ENCODE measurements at regions of chr11 and their contacts with region 1.

Region 1: DNA sequence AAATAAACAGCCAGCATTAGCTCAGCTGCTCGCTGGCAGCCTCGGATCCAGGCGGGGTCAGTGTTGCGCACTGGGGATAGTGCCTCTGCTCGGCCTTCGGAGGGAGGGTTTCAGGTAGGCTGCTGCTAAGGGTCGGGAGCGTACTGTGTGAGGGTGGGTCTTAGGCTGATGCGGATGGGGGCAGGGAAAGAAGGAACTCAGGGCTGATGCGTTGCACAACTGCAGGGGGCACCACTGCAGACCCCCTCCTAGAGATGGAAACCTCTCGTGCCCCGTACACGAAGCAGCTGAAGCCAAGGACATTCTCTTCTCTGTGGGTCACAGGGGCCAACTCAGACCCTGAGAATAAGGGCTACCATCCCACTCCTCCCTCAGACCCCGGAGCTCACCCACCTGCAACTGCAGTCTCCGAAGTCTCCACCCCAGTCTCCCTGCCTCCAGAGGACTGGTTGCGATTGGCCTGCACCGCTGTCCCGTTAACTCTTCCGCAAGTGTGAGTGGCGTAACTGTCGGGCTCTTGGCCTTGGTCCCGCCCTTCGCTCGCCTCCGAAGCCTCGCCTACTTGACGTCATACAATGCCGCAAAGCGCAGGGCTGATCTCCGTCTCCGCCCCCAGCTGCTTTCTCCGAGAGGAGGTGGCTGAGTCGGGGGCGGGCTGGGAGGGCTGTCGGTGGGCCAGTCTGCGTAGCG is at the start of gene KBTBD3:
- DNase-seq: peak; percentile 100
- total RNA-seq, gene KBTBD3: 7.2 TPM

Region 2: GRCh38 chr11:105937331-105937730 is 139.7 kb before region 1 on chr11:
- intact Hi-C with region 1: no loop called
- DNase-seq: no peak

Region 3: GRCh38 chr11:106021967-106022794 is 54.9 kb before region 1 on chr11 and contains the start of gene MSANTD4:
- intact Hi-C with region 1: loop called (anchors 2 kb)
- DNase-seq: peak; percentile 99
- total RNA-seq, gene MSANTD4: 22.8 TPM

Measured in cardiac septum (tissue), 1 donor.